PC-3 (cell line): ENCODE measurements at regions of chr14 and their contacts with region 1.

Region 1: DNA sequence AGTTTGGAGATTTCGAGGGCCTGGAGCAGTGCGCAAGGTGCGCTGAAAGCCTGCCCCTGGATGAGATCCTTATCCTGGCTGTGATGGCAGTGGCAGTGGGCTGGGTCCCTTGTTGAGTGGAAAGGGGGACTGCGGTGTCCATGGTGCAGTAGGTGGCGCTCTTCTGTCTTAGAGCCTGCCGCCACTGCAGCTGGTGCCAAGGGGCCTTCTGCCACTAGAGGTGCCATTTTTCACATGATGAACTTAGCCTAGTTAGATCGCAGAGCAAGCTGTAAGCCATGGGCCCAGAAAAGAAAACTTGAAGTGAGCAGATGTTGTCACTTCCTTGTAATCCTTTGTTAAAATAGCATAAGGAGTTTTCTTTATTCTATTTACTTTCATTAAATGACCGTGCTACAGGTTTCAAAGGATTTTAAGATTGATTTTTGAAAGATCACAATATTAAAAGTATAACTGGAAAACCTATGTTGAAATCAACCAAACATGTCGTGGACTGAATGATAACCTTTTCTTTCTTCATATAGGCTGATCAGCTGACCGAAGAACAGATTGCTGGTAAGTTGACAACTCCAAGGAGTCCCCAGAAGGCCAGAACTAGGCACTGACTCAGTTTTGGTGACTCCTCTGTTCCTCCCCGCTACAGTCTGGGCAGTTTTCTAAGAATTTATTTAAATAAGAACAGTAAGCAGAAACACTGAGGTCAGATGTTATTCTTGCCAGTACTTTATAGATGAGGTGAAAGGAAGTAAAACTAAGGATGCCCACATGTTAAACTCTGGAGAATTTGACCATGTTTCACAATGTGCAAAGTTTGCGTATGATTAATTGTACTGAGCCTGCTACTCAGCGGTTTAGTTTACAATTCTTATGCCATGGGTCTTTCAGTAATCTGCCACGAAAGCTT is 3.0 kb downstream of the CALM1 start:
- DNase-seq: peak; percentile 96
- ATAC-seq: peak; percentile 50
- H3K4me3 ChIP-seq: peak overlapping the region; percentile 95
- H3K27ac ChIP-seq: no peak overlapping the region
- H3K4me1 ChIP-seq: peaks cover 23% of the 10 kb centered on the region
- H3K27me3 ChIP-seq: no peaks in the 10 kb centered on the region
- CTCF ChIP-seq: peak; percentile 100

Region 2: DNA sequence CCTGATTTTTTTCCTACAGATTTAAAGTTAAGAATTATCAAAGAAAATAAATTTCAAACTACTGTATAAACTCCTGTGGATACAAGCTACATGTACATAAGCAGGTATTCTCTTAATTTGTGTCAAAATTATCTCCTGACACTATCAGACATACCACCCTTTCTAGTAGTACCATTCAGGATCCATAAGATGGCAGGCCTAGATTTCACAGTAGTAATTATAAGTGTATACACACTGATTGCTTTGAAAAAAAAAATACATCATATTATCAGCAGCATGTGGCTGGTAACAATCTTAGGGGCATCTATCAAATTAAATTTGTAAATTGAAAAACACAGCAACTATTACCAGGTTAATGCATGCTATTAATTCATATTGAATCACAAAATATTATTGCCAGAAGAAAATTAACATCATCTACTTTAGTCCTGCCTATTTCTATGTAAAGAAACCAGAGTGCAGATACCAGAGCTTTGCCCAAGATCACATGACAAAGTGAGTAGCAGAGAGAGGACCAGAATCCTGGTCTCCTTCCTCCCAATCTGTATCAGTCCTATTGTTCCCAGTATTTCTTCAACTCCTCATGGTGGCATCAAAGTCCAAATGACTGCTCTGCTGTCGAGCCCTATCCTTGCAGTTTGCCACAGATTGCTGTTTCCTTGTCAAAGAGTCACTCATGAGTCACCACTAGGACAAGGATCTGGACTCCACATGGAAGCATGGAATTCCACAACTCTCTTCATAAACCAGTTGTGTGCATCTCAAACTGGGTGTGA is 30.7 kb before region 1 on chr14:
- CTCF ChIA-PET with region 1: no interaction called
- POLR2A ChIA-PET with region 1: no interaction called
- intact Hi-C with region 1: loop called (anchors 2 kb)
- DNase-seq: peak; percentile 66
- ATAC-seq: peak; percentile 95
- H3K4me3 ChIP-seq: no peak overlapping the region
- H3K27ac ChIP-seq: no peak overlapping the region
- H3K4me1 ChIP-seq: peaks cover 6% of the 10 kb centered on the region
- H3K27me3 ChIP-seq: no peaks in the 10 kb centered on the region
- CTCF ChIP-seq: peak; percentile 46

Region 3: GRCh38 chr14:90419200-90419599 is 19.4 kb after region 1 on chr14:
- CTCF ChIA-PET with region 1: interaction called, 17 read pairs
- POLR2A ChIA-PET with region 1: no interaction called
- intact Hi-C with region 1: loop called (anchors 1 kb)
- DNase-seq: peak; percentile 100
- ATAC-seq: peak; percentile 97
- H3K4me3 ChIP-seq: no peak overlapping the region
- H3K27ac ChIP-seq: peak overlapping the region; percentile 87
- H3K4me1 ChIP-seq: peaks cover 15% of the 10 kb centered on the region
- H3K27me3 ChIP-seq: no peaks in the 10 kb centered on the region
- CTCF ChIP-seq: no peak

Region 4: DNA sequence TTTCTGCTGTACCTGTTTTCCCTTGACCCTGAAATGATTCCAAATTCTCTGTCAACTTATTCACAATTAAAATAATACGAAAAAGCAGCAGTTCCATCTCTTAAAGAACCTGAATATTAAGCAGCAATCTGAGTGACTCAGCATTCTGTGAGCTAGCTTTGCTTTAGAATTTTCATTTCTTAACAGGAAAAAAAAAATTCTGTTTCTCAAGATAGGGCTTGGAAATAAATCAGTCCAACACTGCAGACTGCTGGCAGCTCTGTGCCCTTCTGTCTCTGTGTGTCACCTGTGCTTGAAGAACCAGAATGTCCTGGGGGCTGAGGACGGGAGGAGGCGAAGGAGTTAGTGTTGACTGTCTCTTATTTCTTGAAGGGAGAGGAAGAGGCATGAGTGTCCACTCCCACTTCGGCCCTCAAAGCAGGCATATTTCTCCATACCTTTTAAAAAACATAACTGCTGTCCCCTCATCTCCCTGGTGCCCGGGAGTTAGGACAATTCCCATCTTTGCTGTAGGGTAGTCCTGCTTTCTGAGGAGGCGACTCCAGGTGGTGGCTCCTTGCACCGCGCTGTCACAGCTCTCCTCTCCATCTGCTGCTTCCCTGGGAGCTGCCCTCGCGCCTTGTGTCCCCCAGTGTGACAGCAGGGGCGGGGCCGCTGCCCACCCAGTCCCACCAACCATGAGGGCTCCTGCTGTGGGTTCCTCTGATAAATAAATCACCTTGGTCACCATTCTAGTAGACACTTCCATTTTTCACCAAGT is 200.1 kb after region 1 on chr14:
- CTCF ChIA-PET with region 1: interaction called, 6 read pairs
- POLR2A ChIA-PET with region 1: interaction called, 3 read pairs
- intact Hi-C with region 1: loop called (anchors 1 kb)
- DNase-seq: peak; percentile 41
- ATAC-seq: peak; percentile 70
- H3K4me3 ChIP-seq: no peak overlapping the region
- H3K27ac ChIP-seq: no peak overlapping the region
- H3K4me1 ChIP-seq: no peaks in the 10 kb centered on the region
- H3K27me3 ChIP-seq: no peaks in the 10 kb centered on the region
- CTCF ChIP-seq: peak; percentile 45; the same call in 1 of the 2 replicates

Region 5: DNA sequence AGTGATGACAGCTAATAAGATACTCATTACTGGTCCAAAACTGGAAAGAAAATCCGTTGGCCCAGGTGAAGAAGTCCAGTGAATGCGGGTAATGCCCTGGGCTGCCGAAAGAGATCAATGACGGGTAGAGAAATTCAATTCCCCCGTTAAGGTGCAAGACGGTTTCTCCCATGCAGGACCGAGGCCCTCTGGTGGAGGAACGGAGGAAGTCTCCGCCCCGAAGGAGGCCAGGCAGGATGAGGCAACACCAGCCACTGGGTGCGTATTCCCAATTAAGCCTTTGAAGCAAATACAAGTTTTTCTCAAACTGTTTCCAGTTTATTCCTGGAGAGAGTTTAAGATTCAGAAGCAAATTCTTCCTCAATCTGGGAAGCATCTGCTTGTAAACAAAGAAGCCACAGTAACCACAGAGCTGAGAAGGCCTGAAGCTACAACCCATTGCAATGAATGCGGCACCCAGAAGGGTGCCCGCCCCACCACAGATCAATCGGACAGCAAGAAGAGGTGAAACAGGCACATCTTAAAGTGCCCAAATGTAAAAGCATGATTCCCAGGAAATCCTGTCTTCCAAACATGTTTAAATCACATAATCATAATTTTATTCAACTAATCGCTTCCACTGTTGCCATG is 297.9 kb after region 1 on chr14:
- CTCF ChIA-PET with region 1: interaction called, 8 read pairs
- POLR2A ChIA-PET with region 1: no interaction called
- intact Hi-C with region 1: loop called (anchors 1 kb)
- DNase-seq: peak; percentile 82
- ATAC-seq: peak; percentile 97
- H3K4me3 ChIP-seq: no peak overlapping the region
- H3K27ac ChIP-seq: no peak overlapping the region
- H3K4me1 ChIP-seq: 0 out of 2 replicates have a peak, but pooled peaks cover 3% of the 10 kb centered on the region
- H3K27me3 ChIP-seq: no peaks in the 10 kb centered on the region
- CTCF ChIP-seq: peak; percentile 98

Region 6: GRCh38 chr14:90758028-90758889 is 358.5 kb after region 1 on chr14:
- CTCF ChIA-PET with region 1: interaction called, 4 read pairs
- POLR2A ChIA-PET with region 1: no interaction called
- intact Hi-C with region 1: loop called (anchors 1 kb)
- DNase-seq: peak; percentile 98
- ATAC-seq: peak; percentile 96
- H3K4me3 ChIP-seq: peak overlapping the region; percentile 67
- H3K27ac ChIP-seq: peak overlapping the region; percentile 64
- H3K4me1 ChIP-seq: peaks cover 12% of the 10 kb centered on the region
- H3K27me3 ChIP-seq: no peaks in the 10 kb centered on the region
- CTCF ChIP-seq: peak; percentile 79

Region 7: GRCh38 chr14:91138511-91139359 is 738.9 kb after region 1 on chr14:
- CTCF ChIA-PET with region 1: no interaction called
- POLR2A ChIA-PET with region 1: no interaction called
- intact Hi-C with region 1: loop called (anchors 5 kb)
- DNase-seq: peak; percentile 75
- ATAC-seq: peak; percentile 25
- H3K4me3 ChIP-seq: no peak overlapping the region
- H3K27ac ChIP-seq: no peak overlapping the region
- H3K4me1 ChIP-seq: peaks cover 8% of the 10 kb centered on the region
- H3K27me3 ChIP-seq: no peaks in the 10 kb centered on the region
- CTCF ChIP-seq: peak; percentile 78